ENCODE measurements at regions of chr20 and their contacts with region 1.

Region 1: GRCh38 chr20:56316051-56316450 is 42.7 kb upstream of the FAM210B start:
- DNase-seq: no peak
- ATAC-seq: no peak
- H3K4me3 ChIP-seq: no peak overlapping the region
- H3K27ac ChIP-seq: no peak overlapping the region
- H3K4me1 ChIP-seq: no peaks in the 10 kb centered on the region
- H3K27me3 ChIP-seq: no peaks in the 10 kb centered on the region

Region 2: DNA sequence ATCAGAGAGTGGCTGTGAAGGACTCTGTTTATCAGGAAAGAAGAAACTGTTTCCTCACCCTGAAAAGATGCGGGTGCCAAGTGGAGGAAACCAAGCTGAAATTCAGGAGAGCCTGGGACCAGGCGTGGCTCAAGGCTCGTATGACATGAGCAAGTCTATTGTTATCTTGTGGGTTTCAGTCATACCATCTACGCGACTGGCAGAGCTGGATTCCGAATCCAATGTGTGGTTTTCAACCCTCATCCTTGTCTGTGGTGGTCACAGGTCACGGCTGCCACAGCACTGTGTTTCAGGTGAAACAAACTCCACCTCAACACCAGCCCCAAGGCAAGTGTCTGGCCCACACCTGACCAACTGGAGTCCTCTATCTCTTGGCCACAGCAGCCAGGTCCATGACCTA is 58.4 kb before region 1 on chr20:
- intact Hi-C with region 1: loop called in 1 of 4 experiments (anchors 10 kb)
- DNase-seq: no peak
- ATAC-seq: no peak
- H3K4me3 ChIP-seq: no peak overlapping the region
- H3K27ac ChIP-seq: no peak overlapping the region
- H3K4me1 ChIP-seq: no peaks in the 10 kb centered on the region
- H3K27me3 ChIP-seq: peaks cover 2% of the 10 kb centered on the region

Measured in right cardiac atrium (tissue), 5 donors.